ENCODE measurements at regions of chr16 and their contacts with region 1.

Region 1: DNA sequence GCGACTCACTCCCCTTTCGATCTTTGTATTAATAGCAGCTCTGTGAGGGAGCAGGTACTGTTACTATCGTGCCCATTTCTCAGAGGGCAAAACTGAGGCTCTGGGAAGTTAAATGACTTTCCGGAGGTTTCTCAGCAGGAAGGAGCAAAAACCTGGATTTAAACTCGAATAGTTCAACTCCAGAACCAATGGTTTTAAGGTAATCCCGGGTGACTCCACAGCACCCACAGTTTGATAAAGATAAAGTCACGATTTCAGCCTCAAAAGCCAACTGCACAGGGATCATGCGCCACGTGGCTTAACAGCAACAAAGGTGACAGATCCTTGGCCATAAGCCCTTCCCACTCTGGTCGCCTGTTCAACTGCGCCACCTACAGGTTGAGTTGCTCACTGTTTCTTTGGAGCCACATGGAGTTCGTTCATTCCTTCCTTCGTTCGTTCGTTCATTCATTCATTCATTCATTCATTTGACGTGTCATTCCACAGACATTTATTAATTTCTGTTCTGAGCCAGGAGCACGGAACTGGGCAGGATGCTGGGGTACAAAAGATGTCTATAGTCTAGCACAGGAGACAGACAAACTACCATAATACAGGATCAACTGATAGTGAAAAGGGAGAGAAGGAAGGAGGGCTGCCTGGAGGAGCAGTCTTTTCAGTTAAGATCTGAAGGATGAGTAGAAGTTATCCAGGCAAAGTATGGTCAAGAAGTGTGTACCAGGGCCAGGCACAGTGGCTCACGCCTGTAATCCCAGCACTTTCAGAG is 134.8 kb downstream of the HS3ST2 start:
- DNase-seq: peak; percentile 84
- ATAC-seq: peak; percentile 92
- H3K4me3 Mint-ChIP-seq: no peak overlapping the region
- H3K27ac Mint-ChIP-seq: no peak overlapping the region
- H3K4me1 Mint-ChIP-seq: peaks cover 6% of the 10 kb centered on the region
- H3K27me3 Mint-ChIP-seq: peaks cover 45% of the 10 kb centered on the region

Region 2: GRCh38 chr16:21638573-21638975 is 1310.2 kb before region 1 on chr16:
- CTCF ChIA-PET with region 1: no interaction called
- POLR2A ChIA-PET with region 1: no interaction called
- intact Hi-C with region 1: loop called in 1 of 2 experiments (anchors 10 kb)
- DNase-seq: peak; percentile 57
- ATAC-seq: peak; percentile 92
- H3K4me3 Mint-ChIP-seq: no peak overlapping the region
- H3K27ac Mint-ChIP-seq: peak overlapping the region; percentile 74
- H3K4me1 Mint-ChIP-seq: peaks cover 31% of the 10 kb centered on the region
- H3K27me3 Mint-ChIP-seq: no peaks in the 10 kb centered on the region

Region 3: GRCh38 chr16:22813223-22813945 is 135.4 kb before region 1 on chr16:
- CTCF ChIA-PET with region 1: no interaction called
- POLR2A ChIA-PET with region 1: no interaction called
- intact Hi-C with region 1: loop called in 1 of 2 experiments (anchors 2 kb)
- DNase-seq: peak; percentile 68
- ATAC-seq: peak; percentile 49
- H3K4me3 Mint-ChIP-seq: no peak overlapping the region
- H3K27ac Mint-ChIP-seq: no peak overlapping the region
- H3K4me1 Mint-ChIP-seq: peaks cover 7% of the 10 kb centered on the region
- H3K27me3 Mint-ChIP-seq: peaks cover 38% of the 10 kb centered on the region

Region 4: DNA sequence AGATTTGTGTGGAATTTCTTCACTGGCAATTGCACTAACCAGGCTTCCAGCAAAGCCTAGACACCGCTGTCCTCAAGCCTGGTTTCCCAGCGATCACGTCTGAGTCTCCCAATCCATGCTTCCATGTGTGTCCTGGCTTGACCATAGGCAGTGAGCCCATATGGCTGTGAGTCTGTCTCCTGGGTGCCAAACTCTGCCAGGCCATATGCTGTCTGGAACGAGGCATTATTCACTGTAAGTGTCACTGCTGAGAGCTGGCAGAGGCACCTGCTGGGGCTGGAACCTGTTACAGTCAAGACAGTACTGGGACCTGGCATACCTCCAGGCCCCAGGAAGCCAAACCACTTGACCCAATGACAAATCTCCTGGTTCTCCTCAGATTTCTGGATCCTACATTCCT is 74.4 kb before region 1 on chr16:
- CTCF ChIA-PET with region 1: no interaction called
- POLR2A ChIA-PET with region 1: no interaction called
- intact Hi-C with region 1: no loop called
- DNase-seq: no peak
- ATAC-seq: no peak
- H3K4me3 Mint-ChIP-seq: no peak overlapping the region
- H3K27ac Mint-ChIP-seq: no peak overlapping the region
- H3K4me1 Mint-ChIP-seq: no peaks in the 10 kb centered on the region
- H3K27me3 Mint-ChIP-seq: peaks cover 16% of the 10 kb centered on the region

Region 5: DNA sequence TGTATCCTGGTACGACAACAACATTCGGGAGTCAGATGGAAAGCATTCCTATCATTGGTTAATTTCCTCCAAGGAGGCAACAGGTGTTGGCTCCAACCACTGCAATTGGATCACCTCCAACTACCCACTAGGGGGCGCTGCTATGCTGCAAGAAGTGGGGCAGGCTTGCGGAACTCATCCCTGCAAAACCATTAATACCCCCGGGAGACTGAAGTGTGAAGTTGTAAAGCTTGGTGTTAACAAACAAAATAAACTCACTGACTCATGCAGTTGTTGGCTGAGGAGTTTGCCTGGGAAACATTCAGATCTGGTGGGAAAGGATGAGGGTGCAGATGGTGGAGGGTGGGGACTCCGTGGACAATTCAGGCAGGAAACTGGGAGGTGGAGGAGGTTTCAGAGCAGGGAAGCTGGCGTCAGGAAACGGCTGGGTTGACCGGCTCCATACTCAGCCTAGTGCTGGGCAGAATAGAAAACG is 49.9 kb before region 1 on chr16:
- CTCF ChIA-PET with region 1: interaction called, 6 read pairs
- POLR2A ChIA-PET with region 1: interaction called, 3 read pairs
- intact Hi-C with region 1: loop called in 1 of 2 experiments (anchors 2 kb)
- DNase-seq: peak; percentile 69
- ATAC-seq: no peak
- H3K4me3 Mint-ChIP-seq: no peak overlapping the region
- H3K27ac Mint-ChIP-seq: no peak overlapping the region
- H3K4me1 Mint-ChIP-seq: no peaks in the 10 kb centered on the region
- H3K27me3 Mint-ChIP-seq: peaks cover 17% of the 10 kb centered on the region

Region 6: DNA sequence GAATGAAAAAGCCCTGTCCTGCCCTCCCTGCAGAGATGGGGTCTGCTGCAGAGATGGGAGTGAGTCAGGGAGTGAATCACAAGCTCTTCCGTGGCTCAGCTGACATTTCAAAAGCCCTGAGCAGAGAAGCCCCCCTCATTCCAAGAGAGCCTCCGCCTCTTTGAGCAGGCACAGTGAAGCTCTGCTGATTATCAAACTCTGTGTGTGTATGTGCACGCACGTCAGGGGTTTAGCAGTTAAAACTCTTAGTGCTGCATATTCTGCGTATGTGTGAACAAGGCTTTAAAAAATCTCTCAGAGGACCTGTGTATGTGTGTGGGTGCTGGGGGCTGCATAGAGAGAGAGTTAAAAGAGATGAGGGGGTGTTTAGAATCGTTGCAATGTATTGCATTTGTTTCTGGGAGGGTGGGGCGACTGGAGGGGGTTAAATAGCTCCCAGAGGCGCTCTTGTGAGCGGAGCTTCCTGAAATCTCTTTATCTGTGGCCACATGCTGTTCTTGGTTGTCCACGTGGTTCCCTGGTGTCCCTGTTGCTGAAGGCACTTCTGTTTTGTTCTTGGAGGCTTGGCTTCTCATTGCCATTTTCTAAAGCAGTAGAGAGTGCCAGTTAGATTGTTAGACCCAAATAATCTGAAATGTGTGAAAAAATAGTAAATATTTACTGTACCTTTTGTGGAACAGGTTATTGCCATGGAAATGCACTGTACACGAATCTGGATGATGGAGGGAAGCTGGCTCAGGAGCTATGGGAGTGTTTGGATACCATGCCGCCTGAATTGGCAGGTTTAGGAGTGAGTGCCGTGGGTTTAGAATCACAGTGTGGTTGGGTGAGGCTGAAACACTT is 1003.6 kb after region 1 on chr16:
- CTCF ChIA-PET with region 1: no interaction called
- POLR2A ChIA-PET with region 1: no interaction called
- intact Hi-C with region 1: no loop called
- DNase-seq: peak; percentile 67
- ATAC-seq: peak; percentile 75
- H3K4me3 Mint-ChIP-seq: peak overlapping the region; percentile 13
- H3K27ac Mint-ChIP-seq: peak overlapping the region; percentile 84
- H3K4me1 Mint-ChIP-seq: peaks cover 82% of the 10 kb centered on the region
- H3K27me3 Mint-ChIP-seq: no peaks in the 10 kb centered on the region

Measured in activated CD4-positive, alpha-beta T cell treated with anti-CD3 and anti-CD28 coated beads for 36 hours (primary cell).